MCF 10A (cell line): ENCODE measurements at regions of chr9 and their contacts with region 1.

Region 1: GRCh38 chr9:738209-738915 is 103.1 kb upstream of the DMRT1 start:
- DNase-seq: peak; percentile 83
- H3K4me3 Mint-ChIP-seq: peak overlapping the region; percentile 20
- H3K27ac Mint-ChIP-seq: peak overlapping the region; percentile 85
- H3K4me1 Mint-ChIP-seq: peaks cover 9% of the 10 kb centered on the region
- H3K27me3 Mint-ChIP-seq: no peaks in the 10 kb centered on the region
- CTCF ChIP-seq: no peak

Region 2: GRCh38 chr9:706606-707459 is 31.5 kb before region 1 on chr9:
- CTCF ChIA-PET with region 1: no interaction called
- POLR2A ChIA-PET with region 1: interaction called, 21 read pairs
- intact Hi-C with region 1: no loop called
- DNase-seq: peak; percentile 75
- H3K4me3 Mint-ChIP-seq: peak overlapping the region; percentile 77
- H3K27ac Mint-ChIP-seq: peak overlapping the region; percentile 88
- H3K4me1 Mint-ChIP-seq: peaks cover 28% of the 10 kb centered on the region
- H3K27me3 Mint-ChIP-seq: no peaks in the 10 kb centered on the region
- CTCF ChIP-seq: no peak

Region 3: GRCh38 chr9:751137-752051 is 13.0 kb after region 1 on chr9:
- CTCF ChIA-PET with region 1: interaction called, 3 read pairs
- POLR2A ChIA-PET with region 1: interaction called, 45 read pairs
- intact Hi-C with region 1: no loop called
- DNase-seq: no peak
- H3K4me3 Mint-ChIP-seq: no peak overlapping the region
- H3K27ac Mint-ChIP-seq: peak overlapping the region; percentile 78
- H3K4me1 Mint-ChIP-seq: peaks cover 15% of the 10 kb centered on the region
- H3K27me3 Mint-ChIP-seq: no peaks in the 10 kb centered on the region
- CTCF ChIP-seq: no peak

Region 4: DNA sequence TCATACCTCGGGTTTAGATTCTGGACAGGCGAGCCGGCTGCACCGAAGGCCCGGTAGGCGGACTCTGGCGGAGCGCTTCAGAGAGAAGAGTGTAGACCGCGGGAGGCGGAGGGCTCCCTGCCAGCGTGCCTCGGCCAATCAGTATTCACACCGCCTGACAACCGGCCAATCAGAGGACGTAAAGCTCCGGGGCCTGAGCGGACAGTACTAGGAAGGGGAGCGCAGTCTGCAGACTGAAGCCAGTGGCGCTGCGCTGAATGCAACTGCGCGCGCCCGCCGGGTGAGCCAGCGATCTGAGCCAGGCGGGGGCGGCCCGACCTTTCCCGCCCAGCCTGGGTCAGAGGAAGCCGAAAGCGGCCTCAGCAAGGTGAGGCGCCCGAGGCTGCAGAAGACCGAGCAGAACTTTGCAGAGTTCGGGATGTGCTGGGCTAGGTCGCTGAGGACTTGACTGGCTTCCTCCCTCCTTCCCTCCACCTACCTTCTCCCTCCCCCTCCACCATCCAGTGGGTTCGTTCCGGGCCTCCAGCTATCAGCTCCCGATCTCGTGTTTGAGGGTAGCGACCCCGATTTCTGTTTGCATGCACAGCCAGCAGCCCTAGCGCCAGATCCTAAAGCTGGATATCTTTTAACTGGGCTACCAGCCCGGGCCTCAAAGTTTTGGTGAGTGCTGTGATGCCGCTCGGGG is 311.9 kb after region 1 on chr9 and contains the start of gene DMRT2:
- CTCF ChIA-PET with region 1: no interaction called
- POLR2A ChIA-PET with region 1: no interaction called
- intact Hi-C with region 1: no loop called
- DNase-seq: peak; percentile 77
- H3K4me3 Mint-ChIP-seq: peak within 1 kb of the TSS; percentile 48
- H3K27ac Mint-ChIP-seq: no peak within 1 kb of the TSS
- H3K4me1 Mint-ChIP-seq: peaks cover 11% of the 10 kb centered on the region
- H3K27me3 Mint-ChIP-seq: no peaks in the 10 kb centered on the region
- CTCF ChIP-seq: no peak
- total RNA-seq, gene DMRT2: not detected in 2 replicates